ENCODE measurements at regions of chr12 and their contacts with region 1.

Region 1: DNA sequence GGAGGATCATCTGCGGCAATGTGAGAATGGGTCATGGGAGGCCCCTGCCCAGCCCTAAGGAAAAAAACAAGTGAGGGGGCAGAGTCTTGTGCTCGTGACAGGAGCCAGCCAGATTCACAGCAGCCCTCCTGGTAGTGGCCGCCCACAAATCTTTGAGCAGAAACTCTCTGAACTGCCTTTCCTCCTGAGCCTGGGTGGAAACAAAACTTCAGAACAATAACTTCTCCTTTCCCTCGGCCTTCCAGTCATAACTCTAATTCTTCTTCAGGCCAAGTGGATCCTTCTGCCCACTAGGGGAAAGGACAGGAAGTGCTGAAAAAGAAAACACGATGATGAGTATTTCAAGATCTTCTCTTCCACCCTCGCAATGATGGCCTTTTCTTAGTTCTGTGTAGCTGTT is 188.6 kb downstream of the CAND1 start:
- ATAC-seq: peak in 3 of 8 experiments; percentile 29 to 74 (median 58)
- H3K4me3 ChIP-seq: no peak overlapping the region
- H3K27ac ChIP-seq: no peak overlapping the region
- H3K4me1 ChIP-seq: peaks cover 4 to 10% of the 10 kb centered on the region in 2 donors

Region 2: DNA sequence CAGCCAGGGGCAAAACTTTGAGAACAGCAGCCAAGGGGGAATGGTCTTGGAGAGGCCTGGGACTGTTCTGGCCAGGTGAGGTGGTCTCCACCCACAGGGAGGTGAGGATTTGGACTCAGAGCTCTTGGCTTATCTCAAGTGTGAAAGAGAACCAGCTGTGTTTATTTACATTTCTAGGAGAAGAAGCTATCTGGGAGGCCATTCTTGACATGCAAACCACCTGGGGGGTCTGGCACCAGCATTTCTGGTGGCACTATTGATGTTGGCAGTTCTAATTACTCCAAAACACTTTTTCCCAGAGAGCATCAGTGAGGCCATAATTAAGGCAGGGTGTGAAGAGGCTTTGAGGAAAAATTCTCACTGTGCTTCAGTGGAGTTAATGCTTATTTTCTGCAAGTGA is 93.5 kb before region 1 on chr12:
- in situ Hi-C with region 1: no loop called
- ATAC-seq: no peak
- H3K4me3 ChIP-seq: no peak overlapping the region
- H3K27ac ChIP-seq: no peak overlapping the region
- H3K4me1 ChIP-seq: no peaks in the 10 kb centered on the region

Region 3: DNA sequence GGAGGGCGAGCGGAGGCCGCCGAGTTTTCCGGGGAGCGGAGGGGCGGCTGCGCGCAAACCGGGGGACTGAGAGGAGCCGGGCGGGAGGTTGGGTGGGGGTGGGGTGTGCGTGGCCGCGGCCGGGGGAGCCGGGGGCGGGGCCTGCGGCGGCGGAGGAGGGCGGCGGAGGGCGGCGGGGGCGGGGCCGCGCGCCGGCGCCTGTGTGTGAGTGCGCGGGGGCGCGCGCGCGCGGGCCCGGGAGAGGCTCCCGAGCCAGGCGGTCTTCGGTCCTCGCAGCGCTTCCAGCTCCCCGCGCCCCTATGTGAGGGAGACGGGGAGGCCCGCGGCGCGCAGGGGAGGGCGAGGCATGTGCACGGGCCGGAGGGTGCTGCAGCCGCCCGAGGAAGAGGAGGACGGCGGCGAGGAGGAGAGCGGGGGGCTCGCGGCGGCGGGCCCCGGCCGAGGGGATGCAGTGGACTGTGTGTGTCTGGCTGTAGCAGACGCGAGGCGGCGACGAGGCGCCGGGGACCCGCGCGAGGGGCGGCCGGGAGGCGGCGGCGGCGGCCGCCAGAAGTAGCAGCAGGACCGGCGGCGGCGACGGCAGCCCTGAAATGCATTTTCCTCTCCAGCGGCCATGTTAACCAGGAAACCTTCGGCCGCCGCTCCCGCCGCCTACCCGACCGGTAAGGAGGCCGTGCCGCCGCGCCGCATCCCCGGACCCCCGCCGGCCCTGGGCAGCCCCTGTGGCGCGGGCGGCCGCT is 190.9 kb after region 1 on chr12 and contains the start of gene DYRK2:
- in situ Hi-C with region 1: loop called in 1 of 9 experiments (anchors 25 kb)
- ATAC-seq: peak; percentile 38 to 76 (median 68)
- H3K4me3 ChIP-seq: peak within 1 kb of the TSS; percentile 89 to 100 (median 97)
- H3K27ac ChIP-seq: peak within 1 kb of the TSS; percentile 88 to 93
- H3K4me1 ChIP-seq: peaks cover 4 to 11% of the 10 kb centered on the region in 2 donors
- total RNA-seq, gene DYRK2: 11.1 to 34.4 (median 18.8) TPM

Region 4: GRCh38 chr12:67969134-67969802 is 511.5 kb after region 1 on chr12:
- in situ Hi-C with region 1: no loop called
- ATAC-seq: no peak
- H3K4me3 ChIP-seq: no peak overlapping the region
- H3K27ac ChIP-seq: no peak overlapping the region
- H3K4me1 ChIP-seq: peaks cover 0 to 3% of the 10 kb centered on the region in 2 donors

Measured in motor neuron (in vitro differentiated cells).